ENCODE measurements at regions of chr20 and their contacts with region 1.

Region 1: DNA sequence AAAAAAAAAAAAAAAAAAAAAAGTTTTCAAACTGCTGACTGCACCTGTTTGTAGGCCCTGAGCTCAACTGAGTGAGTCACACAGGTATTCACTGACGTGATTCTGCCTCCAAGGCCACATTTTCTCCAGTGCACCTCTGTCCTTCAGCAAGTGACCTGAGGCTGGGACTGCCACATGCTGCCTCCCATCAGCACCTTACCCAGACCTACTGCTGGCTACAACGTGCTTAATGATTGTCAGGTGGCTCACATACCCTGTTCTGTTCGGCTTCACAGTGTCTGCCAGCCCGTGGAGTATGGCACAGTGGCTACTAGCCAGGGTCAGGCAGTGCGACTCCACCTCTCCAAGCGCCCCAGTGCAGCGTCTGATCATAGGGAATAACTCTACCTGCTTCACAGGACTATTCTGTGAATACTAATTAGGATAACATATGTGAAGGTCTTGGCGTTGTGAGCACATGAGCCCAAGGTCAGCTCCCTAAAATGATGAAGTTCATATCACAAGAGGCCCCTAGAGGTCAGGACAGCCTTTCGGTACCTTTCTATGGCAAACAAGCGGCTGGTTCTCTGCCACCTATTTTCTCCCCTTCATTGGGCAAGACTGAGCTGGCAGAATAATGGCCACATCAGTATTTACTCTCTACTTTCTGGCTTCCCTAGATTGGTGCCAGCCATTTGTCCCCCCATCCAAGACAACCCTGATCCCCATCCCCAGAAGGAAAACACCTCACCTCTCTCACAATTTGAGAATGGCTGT is 28.1 kb downstream of the RIPOR3 start:
- DNase-seq: no peak
- H3K4me3 ChIP-seq: no peak overlapping the region
- H3K27ac ChIP-seq: no peak overlapping the region
- H3K4me1 ChIP-seq: peaks cover 0 to 7% (median 1%) of the 10 kb centered on the region in 4 experiments; a peak in 3 of 7 replicates
- H3K27me3 ChIP-seq: no peaks in the 10 kb centered on the region
- CTCF ChIP-seq: peak in 2 of 3 experiments; percentile 65 to 72; a peak in 3 of 4 replicates
- EP300 ChIP-seq: no peak
- POLR2A ChIP-seq: no peak
- RAD21 ChIP-seq: peak; percentile 76 to 84

Region 2: GRCh38 chr20:50478162-50479036 is 184.9 kb before region 1 on chr20:
- CTCF ChIA-PET with region 1: no interaction called
- POLR2A ChIA-PET with region 1: no interaction called
- DNase-seq: peak in 1 of 2 experiments; percentile 79
- H3K4me3 ChIP-seq: no peak overlapping the region
- H3K27ac ChIP-seq: no peak overlapping the region
- H3K4me1 ChIP-seq: no peaks in the 10 kb centered on the region
- H3K27me3 ChIP-seq: no peaks in the 10 kb centered on the region
- CTCF ChIP-seq: peak; percentile 83 to 90 (median 89)
- EP300 ChIP-seq: no peak
- POLR2A ChIP-seq: no peak
- RAD21 ChIP-seq: peak; percentile 52 to 76

Region 3: GRCh38 chr20:50613438-50614169 is 49.7 kb before region 1 on chr20:
- CTCF ChIA-PET with region 1: no interaction called
- POLR2A ChIA-PET with region 1: no interaction called
- DNase-seq: no peak
- H3K4me3 ChIP-seq: no peak overlapping the region
- H3K27ac ChIP-seq: no peak overlapping the region
- H3K4me1 ChIP-seq: peaks cover 0 to 8% (median 2%) of the 10 kb centered on the region in 4 experiments; a peak in 3 of 7 replicates
- H3K27me3 ChIP-seq: no peaks in the 10 kb centered on the region
- CTCF ChIP-seq: no peak
- EP300 ChIP-seq: no peak
- POLR2A ChIP-seq: no peak
- RAD21 ChIP-seq: no peak

Region 4: DNA sequence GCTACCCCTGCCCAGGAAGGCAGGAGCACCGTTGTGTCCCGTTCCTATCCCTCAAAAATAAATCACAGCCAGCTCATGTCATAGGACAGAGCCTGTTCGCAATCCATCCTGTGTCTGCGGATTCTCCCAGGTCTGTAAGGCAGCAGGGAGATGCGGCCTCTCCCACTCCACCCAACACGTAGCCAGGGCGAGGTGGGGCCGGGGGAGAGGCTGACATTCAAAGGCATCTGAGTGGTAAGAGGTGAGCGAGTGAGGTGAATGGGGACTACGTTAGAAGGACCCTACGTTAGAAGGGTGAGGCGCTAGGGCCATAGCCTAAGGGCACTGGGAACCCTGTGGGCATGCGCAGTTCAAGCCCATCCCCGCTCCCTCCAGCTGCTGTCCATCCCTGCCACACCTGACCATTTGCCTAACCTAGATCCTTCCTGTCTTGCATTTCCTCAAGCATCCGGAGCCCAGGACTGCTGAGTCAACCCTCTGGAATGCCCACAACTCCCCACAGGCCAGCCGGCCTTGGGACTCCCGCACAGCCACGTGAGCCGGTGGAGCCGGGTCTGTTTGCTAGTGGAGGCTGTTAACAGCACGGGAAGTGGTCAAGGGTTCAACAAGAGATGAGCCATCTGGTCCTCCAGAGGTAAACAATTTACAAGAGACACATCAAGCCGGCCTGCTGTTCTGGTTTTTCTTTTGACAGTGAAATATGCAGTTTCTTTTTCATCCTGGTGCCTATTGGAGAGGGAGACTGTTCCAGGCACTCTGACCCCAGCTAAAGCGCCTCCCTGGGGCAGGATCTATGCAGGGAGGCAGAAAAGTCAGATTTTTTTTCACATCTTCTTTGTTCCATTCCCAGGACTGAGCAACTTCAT is 17.8 kb before region 1 on chr20:
- CTCF ChIA-PET with region 1: interaction called, 14 read pairs
- POLR2A ChIA-PET with region 1: interaction called, 3 read pairs
- DNase-seq: peak; percentile 77 to 85
- H3K4me3 ChIP-seq: no peak overlapping the region
- H3K27ac ChIP-seq: peak overlapping the region; percentile 64; the same call in 1 of the 2 replicates
- H3K4me1 ChIP-seq: peaks cover 4 to 12% (median 8%) of the 10 kb centered on the region in 4 experiments; a peak in 6 of 7 replicates
- H3K27me3 ChIP-seq: no peaks in the 10 kb centered on the region
- CTCF ChIP-seq: no peak
- EP300 ChIP-seq: no peak
- POLR2A ChIP-seq: peak in 1 of 2 experiments; percentile 32; a peak in 1 of 3 replicates
- RAD21 ChIP-seq: no peak

Region 5: GRCh38 chr20:50690634-50691572 is 27.6 kb after region 1 on chr20 and contains the start of gene RIPOR3:
- CTCF ChIA-PET with region 1: interaction called, 13 read pairs
- POLR2A ChIA-PET with region 1: no interaction called
- DNase-seq: peak in 1 of 2 experiments; percentile 67
- H3K4me3 ChIP-seq: peak within 1 kb of the TSS; percentile 31 to 64 (median 50)
- H3K27ac ChIP-seq: no peak within 1 kb of the TSS
- H3K4me1 ChIP-seq: peaks cover 16 to 24% (median 18%) of the 10 kb centered on the region in 4 experiments
- H3K27me3 ChIP-seq: 0 out of 7 replicates have a peak, but pooled peaks cover 0 to 2% (median 0%) of the 10 kb centered on the region in 4 experiments
- CTCF ChIP-seq: no peak
- EP300 ChIP-seq: no peak
- POLR2A ChIP-seq: no peak
- RAD21 ChIP-seq: no peak
- total RNA-seq, gene RIPOR3: 4.5 and 4.7 TPM in 2 replicates

Region 6: GRCh38 chr20:50713657-50714101 is 50.4 kb after region 1 on chr20:
- CTCF ChIA-PET with region 1: interaction called, 32 read pairs
- POLR2A ChIA-PET with region 1: interaction called, 6 read pairs
- DNase-seq: peak in 1 of 2 experiments; percentile 56
- H3K4me3 ChIP-seq: no peak overlapping the region
- H3K27ac ChIP-seq: no peak overlapping the region
- H3K4me1 ChIP-seq: peaks cover 0 to 3% (median 2%) of the 10 kb centered on the region in 4 experiments; a peak in 1 of 7 replicates
- H3K27me3 ChIP-seq: no peaks in the 10 kb centered on the region
- CTCF ChIP-seq: peak; percentile 46 to 68 (median 66)
- EP300 ChIP-seq: no peak
- POLR2A ChIP-seq: no peak
- RAD21 ChIP-seq: peak; percentile 65 to 76

Region 7: GRCh38 chr20:50724851-50725721 is 61.8 kb after region 1 on chr20:
- CTCF ChIA-PET with region 1: interaction called, 12 read pairs
- POLR2A ChIA-PET with region 1: interaction called, 4 read pairs
- DNase-seq: no peak
- H3K4me3 ChIP-seq: no peak overlapping the region
- H3K27ac ChIP-seq: 0 out of 2 replicates have a peak overlapping the region, but pooled peaks have one; percentile 16
- H3K4me1 ChIP-seq: peaks cover 2 to 11% (median 9%) of the 10 kb centered on the region in 4 experiments; a peak in 5 of 7 replicates
- H3K27me3 ChIP-seq: no peaks in the 10 kb centered on the region
- CTCF ChIP-seq: no peak
- EP300 ChIP-seq: no peak
- POLR2A ChIP-seq: no peak
- RAD21 ChIP-seq: no peak

Region 8: GRCh38 chr20:50744143-50744792 is 81.0 kb after region 1 on chr20:
- CTCF ChIA-PET with region 1: interaction called, 92 read pairs
- POLR2A ChIA-PET with region 1: interaction called, 3 read pairs
- DNase-seq: peak in 1 of 2 experiments; percentile 46
- H3K4me3 ChIP-seq: no peak overlapping the region
- H3K27ac ChIP-seq: 0 out of 2 replicates have a peak overlapping the region, but pooled peaks have one; percentile 45
- H3K4me1 ChIP-seq: peaks cover 2 to 8% (median 5%) of the 10 kb centered on the region in 4 experiments; a peak in 4 of 7 replicates
- H3K27me3 ChIP-seq: no peaks in the 10 kb centered on the region
- CTCF ChIP-seq: 0 out of 4 replicates have a peak, but pooled peaks of 1 of the 3 experiments have one; percentile 9
- EP300 ChIP-seq: no peak
- POLR2A ChIP-seq: no peak
- RAD21 ChIP-seq: peak; percentile 23 to 45; a peak in 2 of 4 replicates

Region 9: DNA sequence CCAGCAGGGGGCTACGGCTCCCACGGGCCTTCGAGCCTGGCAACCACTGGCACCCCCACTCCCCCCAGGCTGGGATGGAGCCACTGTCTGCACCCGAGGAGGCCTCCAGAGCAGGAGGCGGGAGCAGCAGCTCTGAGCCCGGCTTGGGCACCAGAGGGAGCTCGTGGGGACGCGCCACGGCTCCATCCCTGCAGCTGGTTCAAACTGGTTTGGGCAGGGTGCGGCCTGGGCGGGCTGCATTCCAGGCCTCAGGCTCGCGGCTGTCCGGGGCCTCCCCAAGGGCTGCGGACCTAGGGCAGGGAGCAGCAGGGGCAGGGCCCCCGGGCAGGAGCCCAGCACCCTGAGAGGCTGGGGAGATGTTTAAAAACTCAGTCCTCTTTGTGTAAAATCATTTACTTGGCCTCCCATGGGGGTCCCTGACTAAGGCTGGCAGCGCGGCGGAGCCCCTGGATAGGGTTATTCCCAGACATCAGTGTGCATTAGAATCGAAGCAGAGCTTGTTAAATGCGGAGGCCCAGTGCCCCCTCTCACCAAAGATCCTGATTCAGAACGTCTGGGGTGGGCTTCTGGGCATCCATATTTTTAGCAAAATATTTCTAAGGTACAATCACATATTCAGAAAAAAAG is 127.5 kb after region 1 on chr20:
- CTCF ChIA-PET with region 1: interaction called, 27 read pairs
- POLR2A ChIA-PET with region 1: no interaction called
- DNase-seq: peak; percentile 78 to 93
- H3K4me3 ChIP-seq: peak overlapping the region in 2 of 4 experiments; percentile 1 to 29; a peak in 2 of 8 replicates
- H3K27ac ChIP-seq: 0 out of 2 replicates have a peak overlapping the region, but pooled peaks have one; percentile 32
- H3K4me1 ChIP-seq: peaks cover 2 to 4% (median 3%) of the 10 kb centered on the region in 4 experiments; a peak in 5 of 7 replicates
- H3K27me3 ChIP-seq: no peaks in the 10 kb centered on the region; a peak in 1 of 7 replicates
- CTCF ChIP-seq: peak; percentile 69 to 84 (median 82)
- EP300 ChIP-seq: peak in 1 of 2 experiments; percentile 85; a peak in 1 of 3 replicates
- POLR2A ChIP-seq: peak in 1 of 2 experiments; percentile 74; a peak in 2 of 3 replicates
- RAD21 ChIP-seq: peak; percentile 28 to 54

Measured in H1 (cell line).